CD8-positive, alpha-beta memory T cell (primary cell): ENCODE measurements at regions of chr5 and their contacts with region 1.

Region 1: GRCh38 chr5:149434162-149435014 is 55.3 kb upstream of the IL17B start:
- DNase-seq: peak in 4 of 5 donors; percentile 11 to 49 (median 24)
- H3K4me3 ChIP-seq: no peak overlapping the region
- H3K4me3 Mint-ChIP-seq: no peak overlapping the region
- H3K27ac ChIP-seq: no peak overlapping the region
- H3K27ac Mint-ChIP-seq: no peak overlapping the region
- H3K4me1 ChIP-seq: no peaks in the 10 kb centered on the region
- H3K4me1 Mint-ChIP-seq: no peaks in the 10 kb centered on the region
- H3K27me3 ChIP-seq: no peaks in the 10 kb centered on the region
- H3K27me3 Mint-ChIP-seq: peaks cover 0 to 10% of the 10 kb centered on the region in 2 donors

Region 2: GRCh38 chr5:149264439-149265067 is 169.8 kb before region 1 on chr5:
- CTCF ChIA-PET with region 1: no interaction called
- POLR2A ChIA-PET with region 1: no interaction called
- DNase-seq: peak; percentile 19 to 70 (median 49)
- H3K4me3 ChIP-seq: no peak overlapping the region
- H3K4me3 Mint-ChIP-seq: peak overlapping the region in 2 of 7 donors; percentile 45 to 57
- H3K27ac ChIP-seq: no peak overlapping the region
- H3K27ac Mint-ChIP-seq: no peak overlapping the region
- H3K4me1 ChIP-seq: no peaks in the 10 kb centered on the region
- H3K4me1 Mint-ChIP-seq: peaks cover 0 to 8% (median 6%) of the 10 kb centered on the region in 3 donors
- H3K27me3 ChIP-seq: no peaks in the 10 kb centered on the region
- H3K27me3 Mint-ChIP-seq: peaks cover 27 to 34% of the 10 kb centered on the region in 2 donors

Region 3: DNA sequence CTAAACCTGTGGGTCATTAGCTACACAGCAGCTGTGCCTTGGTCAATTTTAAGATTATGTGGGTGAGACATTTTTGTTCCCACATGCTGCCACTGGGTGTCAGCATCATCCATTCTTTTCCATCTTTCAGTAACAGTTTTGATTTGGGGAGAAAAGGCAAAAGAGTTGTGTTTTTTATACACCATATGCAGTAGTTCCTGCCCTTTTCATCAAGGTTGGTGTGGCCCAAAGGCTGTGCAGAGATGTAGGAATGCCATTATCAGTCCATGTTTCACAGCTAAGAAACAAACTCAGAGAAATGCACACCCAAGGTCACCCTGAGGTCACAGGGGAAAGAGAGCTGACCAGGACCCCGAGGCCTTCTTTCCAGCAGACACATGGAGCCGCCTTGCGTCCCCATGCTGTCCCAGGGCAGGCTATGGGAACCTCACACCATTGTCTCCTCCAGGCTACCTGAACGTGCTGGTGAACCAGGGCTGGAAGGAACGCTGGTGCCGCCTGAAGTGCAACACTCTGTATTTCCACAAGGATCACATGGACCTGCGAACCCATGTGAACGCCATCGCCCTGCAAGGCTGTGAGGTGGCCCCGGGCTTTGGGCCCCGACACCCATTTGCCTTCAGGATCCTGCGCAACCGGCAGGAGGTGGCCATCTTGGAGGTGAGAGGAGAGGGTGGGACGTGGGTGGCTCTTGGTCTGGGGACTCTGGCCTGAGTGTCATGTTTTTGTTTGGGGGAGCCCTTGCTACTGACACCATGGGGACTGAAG is 116.9 kb before region 1 on chr5:
- CTCF ChIA-PET with region 1: interaction called, 17 read pairs
- POLR2A ChIA-PET with region 1: interaction called, 3 read pairs
- DNase-seq: peak in 4 of 5 donors; percentile 13 to 52 (median 24)
- H3K4me3 ChIP-seq: no peak overlapping the region
- H3K4me3 Mint-ChIP-seq: no peak overlapping the region
- H3K27ac ChIP-seq: no peak overlapping the region
- H3K27ac Mint-ChIP-seq: no peak overlapping the region
- H3K4me1 ChIP-seq: peaks cover 3% of the 10 kb centered on the region
- H3K4me1 Mint-ChIP-seq: no peaks in the 10 kb centered on the region
- H3K27me3 ChIP-seq: no peaks in the 10 kb centered on the region
- H3K27me3 Mint-ChIP-seq: peaks cover 4 to 5% of the 10 kb centered on the region in 2 donors